Heart right ventricle (tissue), 16 donors: ENCODE measurements at regions of chr1 and their contacts with region 1.

Region 1: DNA sequence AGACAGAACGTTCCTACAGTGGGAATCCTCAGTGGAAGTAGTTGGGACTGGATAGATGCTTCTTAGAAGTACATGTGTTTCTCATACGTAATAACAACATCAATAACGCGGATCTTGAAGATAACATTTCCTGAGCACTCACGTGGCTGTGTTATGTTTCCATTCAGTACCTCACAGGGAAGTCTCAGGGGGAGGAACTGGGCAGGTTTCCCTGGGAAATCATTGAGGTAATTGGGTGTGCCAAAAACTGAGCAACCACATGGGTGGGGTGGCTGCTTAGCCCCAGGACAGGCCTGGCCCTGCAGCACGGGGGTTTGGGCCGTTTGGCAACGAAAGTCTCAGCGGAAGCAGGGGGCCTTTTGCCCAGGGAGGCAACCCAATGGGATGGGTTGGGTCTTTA is 133.8 kb downstream of the ZSCAN20 start:
- DNase-seq: peak; percentile 33 to 75
- ATAC-seq: peak; percentile 56 to 93 (median 76)
- H3K4me3 ChIP-seq: no peak overlapping the region
- H3K27ac ChIP-seq: peak overlapping the region in 8 of 10 donors; percentile 29 to 79 (median 69)
- H3K4me1 ChIP-seq: peaks cover 0 to 44% (median 13%) of the 10 kb centered on the region in 9 donors
- H3K27me3 ChIP-seq: no peaks in the 10 kb centered on the region
- CTCF ChIP-seq: no peak

Region 2: GRCh38 chr1:33094971-33095604 is 511.2 kb before region 1 on chr1:
- intact Hi-C with region 1: loop called in 5 of 10 experiments (anchors 5 to 10 kb)
- DNase-seq: peak in 1 of 2 donors; percentile 63
- ATAC-seq: peak in 4 of 8 donors; percentile 22 to 55 (median 41)
- H3K4me3 ChIP-seq: no peak overlapping the region
- H3K27ac ChIP-seq: no peak overlapping the region
- H3K4me1 ChIP-seq: peaks cover 0 to 35% (median 7%) of the 10 kb centered on the region in 9 donors
- H3K27me3 ChIP-seq: no peaks in the 10 kb centered on the region
- CTCF ChIP-seq: peak; percentile 92 to 99 (median 98)

Region 3: DNA sequence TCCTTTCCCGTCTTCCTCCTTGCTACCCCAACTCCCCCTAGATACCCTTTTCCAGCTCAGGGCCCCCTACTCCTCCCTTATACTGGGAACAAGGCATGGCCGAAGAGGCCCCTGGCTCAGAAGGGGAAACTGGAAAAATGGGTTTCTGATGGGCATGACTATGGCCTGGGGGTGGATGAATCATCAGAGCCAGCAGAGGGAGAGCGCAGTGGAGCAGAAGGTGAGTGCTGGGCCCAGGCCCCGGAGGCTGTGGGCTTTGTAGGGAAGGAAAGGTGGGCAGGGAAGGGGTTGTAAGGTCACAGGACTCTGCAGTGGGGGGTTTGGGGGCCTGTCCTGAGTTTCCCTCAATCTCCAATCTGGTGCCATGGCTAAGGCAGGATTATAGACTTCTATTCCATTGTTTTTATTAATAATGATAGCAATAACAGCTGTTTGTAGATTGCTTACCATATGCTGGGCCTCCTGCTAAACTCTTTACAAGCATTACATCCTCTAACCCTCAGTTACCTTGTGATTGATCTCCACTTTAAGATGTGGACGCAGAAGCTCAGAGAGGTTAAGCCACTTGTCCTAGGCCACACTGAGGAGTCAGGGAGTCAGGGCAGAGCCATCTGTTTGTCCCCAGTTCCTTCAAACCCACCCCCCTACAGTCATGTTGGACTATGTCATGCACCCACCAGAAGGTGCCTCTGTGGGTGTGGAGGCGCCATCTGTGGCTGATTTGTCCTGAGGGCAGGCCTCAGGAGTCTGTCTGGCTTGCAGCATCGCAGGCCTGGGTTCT is 386.2 kb before region 1 on chr1:
- intact Hi-C with region 1: loop called in 3 of 10 experiments (anchors 5 to 10 kb)
- DNase-seq: no peak
- ATAC-seq: peak in 4 of 8 donors; percentile 30 to 46 (median 44)
- H3K4me3 ChIP-seq: no peak overlapping the region
- H3K27ac ChIP-seq: peak overlapping the region in 2 of 10 donors; percentile 2 to 15
- H3K4me1 ChIP-seq: peaks cover 0 to 25% (median 6%) of the 10 kb centered on the region in 9 donors
- H3K27me3 ChIP-seq: no peaks in the 10 kb centered on the region
- CTCF ChIP-seq: no peak

Region 4: DNA sequence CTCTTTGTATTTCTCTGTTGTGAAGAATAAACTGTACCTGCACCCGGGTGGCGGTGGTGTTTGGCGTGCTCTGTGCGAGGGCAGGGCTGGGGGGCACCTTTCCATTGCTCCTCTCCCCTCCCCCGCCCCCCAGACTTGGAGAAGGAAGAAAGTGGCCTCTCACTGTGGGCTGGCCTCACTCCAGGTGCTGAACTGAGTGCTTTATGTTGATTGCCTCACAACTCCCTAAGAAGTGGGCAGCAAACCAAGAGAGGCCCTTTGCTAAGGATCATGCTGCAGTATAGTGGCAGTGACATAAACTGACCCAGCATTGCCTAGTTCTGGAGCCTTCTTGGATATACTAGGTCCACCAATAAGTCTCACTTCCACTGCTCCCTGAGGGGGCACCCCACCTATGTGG is 305.6 kb before region 1 on chr1:
- intact Hi-C with region 1: loop called in 6 of 10 experiments (anchors 5 to 10 kb)
- DNase-seq: peak in 1 of 2 donors; percentile 54
- ATAC-seq: peak in 2 of 8 donors; percentile 41 to 49
- H3K4me3 ChIP-seq: no peak overlapping the region
- H3K27ac ChIP-seq: no peak overlapping the region
- H3K4me1 ChIP-seq: peaks cover 0 to 35% (median 21%) of the 10 kb centered on the region in 9 donors
- H3K27me3 ChIP-seq: no peaks in the 10 kb centered on the region
- CTCF ChIP-seq: no peak

Region 5: DNA sequence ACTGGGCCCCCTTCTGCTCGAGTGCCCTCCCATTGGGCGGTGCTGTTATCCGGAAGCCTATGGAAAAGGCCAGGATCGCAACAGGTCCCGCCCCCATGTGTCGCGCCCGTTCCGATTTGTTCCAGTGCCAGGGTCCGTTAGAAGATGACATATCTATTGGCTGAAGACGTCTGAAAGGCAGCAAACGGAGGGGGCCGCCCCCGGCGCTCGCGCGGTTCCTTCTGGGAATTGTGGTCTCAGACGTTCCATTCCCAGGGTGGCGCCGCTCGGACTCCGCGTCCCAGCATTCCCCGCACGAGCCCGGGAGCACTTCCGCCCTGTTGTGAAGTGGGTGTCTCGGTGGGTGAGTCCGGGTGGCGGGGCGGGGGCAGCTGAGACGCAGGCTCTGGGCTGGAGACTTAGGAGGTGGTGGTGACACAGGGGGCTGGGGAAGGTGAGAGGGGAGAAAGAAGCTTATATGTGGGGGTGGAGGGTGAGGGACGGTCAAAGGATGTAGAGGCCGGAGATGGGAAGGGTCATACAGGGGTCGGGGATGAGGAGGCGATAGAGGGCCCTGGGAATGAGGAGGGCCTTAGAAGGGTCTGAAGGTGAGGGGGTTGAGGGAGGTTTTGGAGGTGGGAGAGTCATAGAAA is 133.8 kb before region 1 on chr1 and contains the start of gene ZSCAN20:
- intact Hi-C with region 1: loop called in 9 of 10 experiments (anchors 2 to 10 kb)
- DNase-seq: peak; percentile 98 to 99
- ATAC-seq: peak; percentile 89 to 97 (median 94)
- H3K4me3 ChIP-seq: peak within 1 kb of the TSS; percentile 19 to 77 (median 64)
- H3K27ac ChIP-seq: peak within 1 kb of the TSS; percentile 59 to 92 (median 84)
- H3K4me1 ChIP-seq: peaks cover 3 to 65% (median 41%) of the 10 kb centered on the region in 9 donors
- H3K27me3 ChIP-seq: no peaks in the 10 kb centered on the region
- CTCF ChIP-seq: no peak
- total RNA-seq, gene ZSCAN20: 3.4 to 9.3 (median 5.8) TPM

Region 6: DNA sequence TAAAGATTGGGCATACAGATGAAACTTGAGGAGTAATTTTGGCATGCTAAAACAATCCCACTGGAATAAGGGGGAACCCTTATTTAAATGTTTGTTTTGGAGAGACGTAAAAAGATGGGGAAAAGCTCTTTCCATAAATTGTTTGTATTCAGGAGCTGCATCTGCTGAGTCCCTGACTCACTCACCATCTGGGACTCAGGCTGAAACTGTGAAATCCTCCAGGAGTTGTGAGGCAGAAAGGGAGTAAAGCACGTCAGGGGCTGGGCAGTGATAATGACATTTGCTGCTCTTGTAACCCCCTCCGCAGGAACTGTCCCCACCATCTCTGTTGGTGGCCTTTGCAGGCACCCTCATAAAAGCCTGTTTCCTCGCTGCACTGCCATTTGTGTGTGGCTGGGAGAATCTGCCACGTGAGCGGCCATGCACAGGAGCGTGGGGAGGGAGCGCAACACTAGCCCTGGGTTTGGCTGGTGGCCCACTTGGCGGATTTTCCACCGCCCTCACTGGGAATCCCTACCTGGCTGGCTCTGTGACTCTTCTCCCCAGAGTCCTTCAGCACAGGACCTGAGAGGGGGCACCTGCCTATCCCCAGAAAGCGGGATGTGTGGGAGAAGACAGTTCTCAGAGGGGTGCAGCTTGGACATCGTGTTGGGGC is 88.5 kb before region 1 on chr1:
- intact Hi-C with region 1: loop called in 3 of 10 experiments (anchors 5 to 10 kb)
- DNase-seq: no peak
- ATAC-seq: no peak
- H3K4me3 ChIP-seq: no peak overlapping the region
- H3K27ac ChIP-seq: no peak overlapping the region
- H3K4me1 ChIP-seq: peaks cover 0 to 14% (median 0%) of the 10 kb centered on the region in 9 donors
- H3K27me3 ChIP-seq: no peaks in the 10 kb centered on the region
- CTCF ChIP-seq: no peak

Region 7: GRCh38 chr1:33575324-33575879 is 30.9 kb before region 1 on chr1:
- intact Hi-C with region 1: loop called in 4 of 10 experiments (anchors 2 to 5 kb)
- DNase-seq: peak; percentile 20 to 84
- ATAC-seq: peak; percentile 81 to 95 (median 92)
- H3K4me3 ChIP-seq: peak overlapping the region in 1 of 10 donors; percentile 9
- H3K27ac ChIP-seq: peak overlapping the region; percentile 70 to 96 (median 90)
- H3K4me1 ChIP-seq: peaks cover 17 to 84% (median 47%) of the 10 kb centered on the region in 9 donors
- H3K27me3 ChIP-seq: no peaks in the 10 kb centered on the region
- CTCF ChIP-seq: no peak